Astrocyte of the cerebellum (primary cell): ENCODE measurements at regions of chr16 and their contacts with region 1.

Region 1: DNA sequence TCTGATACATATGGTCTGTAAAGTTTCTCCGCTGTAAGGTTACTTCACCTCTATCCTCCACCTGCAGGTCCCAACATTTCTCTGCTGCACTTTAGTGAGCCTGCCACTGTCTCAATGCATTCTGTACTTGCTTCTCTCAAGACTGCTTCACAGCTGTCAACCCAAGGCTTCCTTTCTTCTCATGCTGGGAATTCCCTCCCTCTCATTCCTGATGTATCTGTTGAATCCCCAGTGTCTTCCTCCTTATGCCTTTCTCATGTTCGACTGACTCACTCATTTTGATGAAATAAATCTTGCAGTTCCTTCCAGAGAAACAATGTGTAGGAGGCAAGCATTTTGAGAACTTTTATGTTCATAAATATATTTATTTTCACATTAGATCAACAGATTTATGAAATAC is 288.3 kb downstream of the CNTNAP4 start:
- DNase-seq: no peak
- H3K4me3 ChIP-seq: no peak overlapping the region
- CTCF ChIP-seq: no peak

Region 2: DNA sequence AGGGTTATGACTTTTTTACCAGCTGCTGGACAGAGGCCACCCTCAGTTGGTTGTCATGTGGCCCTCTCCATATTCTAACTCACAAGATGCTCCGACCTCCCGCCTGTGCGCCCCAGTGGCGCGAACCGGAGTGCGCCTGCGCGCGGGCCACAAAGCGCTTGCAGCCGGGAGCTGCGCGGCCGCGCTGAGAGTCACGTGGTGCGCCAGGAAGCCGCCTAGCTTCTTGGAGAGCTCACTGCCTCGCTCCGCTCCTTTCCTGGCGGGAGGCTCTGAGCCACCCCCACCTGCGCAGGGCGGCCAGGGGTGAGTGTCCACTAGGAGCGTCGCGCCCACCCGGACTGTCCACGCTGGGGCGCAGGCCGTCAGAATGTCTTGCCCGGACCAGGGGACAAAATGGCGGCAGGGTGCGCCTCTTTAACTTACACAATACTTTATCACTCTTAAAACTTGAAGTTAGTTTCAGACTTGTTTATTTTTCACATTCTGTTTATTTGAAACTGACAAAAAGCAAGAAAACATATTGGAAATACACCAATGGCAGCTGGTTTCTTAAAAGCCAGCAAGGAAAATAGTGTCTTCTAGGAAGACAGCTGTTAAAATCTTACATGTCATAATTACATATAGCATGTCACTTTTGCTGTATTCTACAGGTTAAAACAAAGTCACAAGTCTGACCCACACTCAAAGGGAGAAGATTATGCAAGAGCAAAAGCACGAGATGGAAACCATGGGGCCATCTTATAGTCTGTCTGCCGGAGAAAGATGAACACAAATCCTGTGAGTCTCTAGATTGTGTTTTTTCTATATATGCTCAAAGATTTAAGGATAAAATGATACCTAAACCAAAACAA is 69.5 kb after region 1 on chr16:
- in situ Hi-C with region 1: loop called (anchors 5 kb)
- DNase-seq: no peak
- H3K4me3 ChIP-seq: no peak overlapping the region
- CTCF ChIP-seq: no peak

Region 3: GRCh38 chr16:76650582-76650981 is 85.0 kb after region 1 on chr16:
- in situ Hi-C with region 1: no loop called
- DNase-seq: no peak
- H3K4me3 ChIP-seq: no peak overlapping the region
- CTCF ChIP-seq: no peak